Body of pancreas (tissue), 4 donors: ENCODE measurements at regions of chr5 and their contacts with region 1.

Region 1: GRCh38 chr5:123423278-123424149 is at the start of gene CEP120:
- DNase-seq: peak; percentile 99
- ATAC-seq: peak; percentile 96
- H3K4me3 ChIP-seq: peak within 1 kb of the TSS; percentile 88 to 95
- H3K27ac ChIP-seq: peak within 1 kb of the TSS; percentile 81 to 88 (median 84)
- H3K4me1 ChIP-seq: peaks cover 37% of the 10 kb centered on the region
- H3K27me3 ChIP-seq: no peaks in the 10 kb centered on the region
- CTCF ChIP-seq: peak; percentile 32 to 96 (median 88)
- POLR2A ChIP-seq: peak; percentile 89 to 96 (median 93)
- total RNA-seq, gene CEP120: 6.6 to 11.2 TPM

Region 2: DNA sequence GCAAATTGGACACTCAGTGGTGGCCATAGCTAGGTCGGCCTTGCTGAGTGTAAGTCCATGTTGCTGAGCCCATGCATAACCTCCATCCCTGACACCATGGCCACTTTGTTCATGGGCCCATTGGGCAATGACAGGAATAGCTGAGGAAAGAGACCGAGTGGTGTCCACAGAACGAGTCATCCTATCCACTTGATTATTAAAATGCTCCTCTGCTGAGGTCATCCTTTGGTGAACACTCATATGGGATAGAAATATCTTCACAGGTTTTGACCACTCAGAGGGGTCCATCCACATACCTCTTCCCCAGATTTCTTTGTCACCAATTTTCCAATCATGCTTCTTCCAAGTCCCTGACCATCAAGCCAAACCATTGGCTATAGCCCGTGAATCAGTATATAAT is 450.6 kb before region 1 on chr5:
- intact Hi-C with region 1: no loop called
- DNase-seq: no peak
- ATAC-seq: no peak
- H3K4me3 ChIP-seq: no peak overlapping the region
- H3K27ac ChIP-seq: no peak overlapping the region
- H3K4me1 ChIP-seq: peaks cover 18% of the 10 kb centered on the region
- H3K27me3 ChIP-seq: no peaks in the 10 kb centered on the region
- CTCF ChIP-seq: no peak
- POLR2A ChIP-seq: no peak

Region 3: GRCh38 chr5:123505633-123506032 is 82.1 kb after region 1 on chr5:
- intact Hi-C with region 1: loop called (anchors 10 kb)
- DNase-seq: peak in 3 of 4 donors; percentile 27 to 50 (median 36)
- ATAC-seq: no peak
- H3K4me3 ChIP-seq: no peak overlapping the region
- H3K27ac ChIP-seq: no peak overlapping the region
- H3K4me1 ChIP-seq: no peaks in the 10 kb centered on the region
- H3K27me3 ChIP-seq: no peaks in the 10 kb centered on the region
- CTCF ChIP-seq: no peak
- POLR2A ChIP-seq: no peak

Region 4: DNA sequence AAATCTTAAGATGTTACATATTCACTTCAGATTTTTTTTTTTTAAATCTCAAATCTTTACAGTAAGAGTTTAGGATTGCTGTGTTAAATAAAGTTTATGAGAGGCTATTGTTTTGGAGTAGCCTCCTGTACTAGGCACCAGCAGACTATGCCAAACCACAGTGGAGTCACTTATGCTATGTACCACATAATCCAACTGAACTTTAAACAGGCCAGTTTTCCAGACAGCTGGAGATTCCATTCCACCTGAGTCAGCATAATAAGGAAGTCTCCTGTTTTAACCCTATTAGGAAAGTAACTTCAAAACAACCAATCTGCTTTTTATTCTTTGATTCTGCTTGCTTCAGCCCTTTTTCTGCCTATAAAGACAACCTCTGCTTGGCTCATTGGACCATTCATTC is 293.6 kb after region 1 on chr5:
- intact Hi-C with region 1: no loop called
- DNase-seq: no peak
- ATAC-seq: no peak
- H3K4me3 ChIP-seq: no peak overlapping the region
- H3K27ac ChIP-seq: no peak overlapping the region
- H3K4me1 ChIP-seq: no peaks in the 10 kb centered on the region
- H3K27me3 ChIP-seq: no peaks in the 10 kb centered on the region
- CTCF ChIP-seq: no peak
- POLR2A ChIP-seq: no peak